A673 (cell line): ENCODE measurements at regions of chrX and their contacts with region 1.

Region 1: DNA sequence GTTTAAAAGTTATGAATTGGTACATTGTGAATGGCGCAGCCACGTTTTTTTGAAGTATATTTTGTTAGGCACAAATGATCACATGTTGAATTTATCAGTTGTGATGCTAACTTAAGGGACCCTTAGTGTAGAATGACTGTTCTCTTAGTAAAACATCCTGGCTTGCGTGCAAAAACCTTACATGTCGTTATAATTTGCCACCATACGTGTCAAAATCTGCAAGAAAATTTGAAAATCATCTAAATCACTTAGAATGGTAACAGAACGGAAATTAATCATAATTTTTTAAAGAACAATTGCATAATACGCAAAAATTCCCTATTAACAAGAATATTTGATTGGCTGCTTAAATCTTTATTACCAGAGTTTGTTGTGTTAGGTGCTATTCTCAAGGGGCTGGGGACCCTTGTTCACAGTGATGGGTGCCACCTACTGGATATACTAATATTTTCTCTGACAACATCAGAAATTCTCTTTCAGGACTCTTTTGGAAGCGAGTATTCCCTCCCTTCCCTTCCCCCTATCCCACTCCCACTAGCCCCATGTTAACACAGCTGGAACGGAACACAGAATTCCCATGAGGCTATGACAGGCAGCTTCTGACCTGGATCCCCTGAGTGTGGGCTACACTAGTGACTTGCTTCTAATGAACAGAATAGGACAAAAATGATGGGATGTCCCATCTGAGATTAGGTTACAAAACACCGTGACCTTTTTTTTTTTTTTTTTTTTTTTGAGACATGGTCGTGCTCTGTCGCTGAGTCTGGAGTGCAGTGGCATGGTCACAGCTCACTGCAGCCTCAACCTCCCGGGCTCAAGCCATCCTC is 71.8 kb downstream of the SUPT20HL2 start:
- DNase-seq: peak; percentile 80
- H3K4me3 ChIP-seq: no peak overlapping the region
- H3K27ac ChIP-seq: no peak overlapping the region
- H3K4me1 ChIP-seq: peaks cover 36% of the 10 kb centered on the region
- H3K27me3 ChIP-seq: no peaks in the 10 kb centered on the region
- CTCF ChIP-seq: peak; percentile 65

Region 2: DNA sequence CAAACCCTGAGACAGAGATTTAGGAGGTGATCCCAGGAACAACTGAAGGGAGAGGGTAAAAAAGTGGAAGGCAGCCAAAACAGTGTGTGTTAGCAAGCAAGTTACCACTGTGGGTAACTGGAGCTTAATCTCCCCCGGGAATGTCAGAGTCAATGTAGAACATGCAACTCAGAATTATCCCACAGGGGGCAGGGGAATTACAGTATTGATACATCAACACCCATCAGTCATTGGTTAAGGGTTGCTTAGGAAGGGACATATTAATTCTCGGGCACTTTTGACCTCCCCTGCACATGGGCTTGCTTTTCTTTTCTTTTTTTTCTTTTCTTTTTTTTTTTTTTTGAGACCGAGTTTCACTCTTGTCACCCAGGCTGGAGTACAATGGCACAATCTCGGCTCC is 304.9 kb before region 1 on chrX:
- CTCF ChIA-PET with region 1: no interaction called
- POLR2A ChIA-PET with region 1: no interaction called
- intact Hi-C with region 1: no loop called
- DNase-seq: peak; percentile 68
- H3K4me3 ChIP-seq: no peak overlapping the region
- H3K27ac ChIP-seq: no peak overlapping the region
- H3K4me1 ChIP-seq: peaks cover 4% of the 10 kb centered on the region
- H3K27me3 ChIP-seq: peaks cover 5% of the 10 kb centered on the region
- CTCF ChIP-seq: peak; percentile 19; the same call in 1 of the 2 replicates

Region 3: GRCh38 chrX:24081661-24082264 is 160.3 kb before region 1 on chrX:
- CTCF ChIA-PET with region 1: interaction called, 3 read pairs
- POLR2A ChIA-PET with region 1: no interaction called
- intact Hi-C with region 1: loop called (anchors 2 kb)
- DNase-seq: peak; percentile 72
- H3K4me3 ChIP-seq: peak overlapping the region; percentile 34
- H3K27ac ChIP-seq: no peak overlapping the region
- H3K4me1 ChIP-seq: no peaks in the 10 kb centered on the region
- H3K27me3 ChIP-seq: no peaks in the 10 kb centered on the region
- CTCF ChIP-seq: peak; percentile 78

Region 4: GRCh38 chrX:24149351-24150050 is 92.5 kb before region 1 on chrX and contains the start of gene ZFX:
- CTCF ChIA-PET with region 1: no interaction called
- POLR2A ChIA-PET with region 1: no interaction called
- intact Hi-C with region 1: loop called (anchors 5 kb)
- DNase-seq: peak; percentile 82
- H3K4me3 ChIP-seq: peak within 1 kb of the TSS; percentile 75
- H3K27ac ChIP-seq: peak within 1 kb of the TSS; percentile 97
- H3K4me1 ChIP-seq: peaks cover 56% of the 10 kb centered on the region
- H3K27me3 ChIP-seq: no peaks in the 10 kb centered on the region
- CTCF ChIP-seq: no peak
- total RNA-seq, gene ZFX: 63.9 and 64.6 TPM in 2 replicates

Region 5: GRCh38 chrX:25175743-25176142 is 933.7 kb after region 1 on chrX:
- CTCF ChIA-PET with region 1: no interaction called
- POLR2A ChIA-PET with region 1: no interaction called
- intact Hi-C with region 1: no loop called
- DNase-seq: no peak
- H3K4me3 ChIP-seq: no peak overlapping the region
- H3K27ac ChIP-seq: no peak overlapping the region
- H3K4me1 ChIP-seq: no peaks in the 10 kb centered on the region
- H3K27me3 ChIP-seq: peaks cover 43% of the 10 kb centered on the region
- CTCF ChIP-seq: no peak